ENCODE measurements at regions of chr17 and their contacts with region 1.

Region 1: GRCh38 chr17:70378076-70378475 is 208.7 kb downstream of the KCNJ2 start:
- DNase-seq: no peak
- ATAC-seq: no peak
- H3K4me3 ChIP-seq: no peak overlapping the region
- H3K27ac ChIP-seq: no peak overlapping the region
- H3K4me1 ChIP-seq: no peaks in the 10 kb centered on the region
- H3K27me3 ChIP-seq: no peaks in the 10 kb centered on the region
- CTCF ChIP-seq: no peak

Region 2: DNA sequence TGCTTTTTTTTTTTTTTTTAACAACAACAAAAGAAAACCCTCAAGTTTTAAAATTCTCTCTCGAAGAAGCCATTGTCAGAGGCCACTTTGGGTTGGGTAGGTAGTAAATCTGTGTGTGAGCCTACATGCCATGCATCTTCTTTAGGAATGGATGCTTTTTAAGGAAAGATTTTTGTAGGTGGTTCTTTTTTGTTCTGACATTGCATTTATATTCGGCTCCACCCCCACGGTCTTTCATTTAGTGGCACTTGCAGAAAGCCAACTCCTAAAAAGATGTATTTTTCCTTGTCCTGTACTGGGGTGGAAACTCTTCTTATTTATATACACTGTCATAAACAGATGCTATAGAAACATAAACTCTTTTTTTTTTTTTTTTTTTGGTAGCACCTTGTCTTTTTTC is 173.6 kb before region 1 on chr17:
- CTCF ChIA-PET with region 1: interaction called, 12 read pairs
- POLR2A ChIA-PET with region 1: no interaction called
- in situ Hi-C with region 1: no loop called
- intact Hi-C with region 1: no loop called
- DNase-seq: no peak
- ATAC-seq: no peak
- H3K4me3 ChIP-seq: no peak overlapping the region
- H3K27ac ChIP-seq: no peak overlapping the region
- H3K4me1 ChIP-seq: no peaks in the 10 kb centered on the region
- H3K27me3 ChIP-seq: no peaks in the 10 kb centered on the region; the same call in 1 of the 2 replicates
- CTCF ChIP-seq: no peak

Measured in Panc1 (cell line).